Right lobe of liver (tissue), 6 donors: ENCODE measurements at regions of chr15 and their contacts with region 1.

Region 1: DNA sequence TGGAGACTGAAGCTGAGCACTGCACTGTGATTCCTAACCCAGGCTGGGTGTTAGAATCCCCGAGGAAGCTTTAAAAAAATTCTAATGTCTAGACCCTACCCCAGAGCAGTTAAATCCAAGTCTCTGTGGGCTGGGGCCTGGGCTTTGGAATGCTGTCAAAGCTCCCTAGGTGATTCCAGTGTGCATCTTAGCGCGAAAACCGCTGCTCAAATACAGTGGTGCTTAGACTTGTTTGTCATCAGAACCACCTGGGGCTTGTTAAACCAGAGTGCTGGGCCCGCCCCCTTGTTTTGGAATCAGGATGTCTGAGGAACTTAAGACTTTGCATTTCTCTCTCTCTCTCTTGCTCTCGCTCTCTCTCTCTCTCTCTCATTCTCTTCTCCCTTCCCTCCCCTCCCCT is 20.7 kb downstream of the RHCG start:
- DNase-seq: peak in 1 of 3 donors; percentile 25
- ATAC-seq: no peak
- H3K4me3 ChIP-seq: no peak overlapping the region
- H3K27ac ChIP-seq: no peak overlapping the region
- H3K4me1 ChIP-seq: no peaks in the 10 kb centered on the region
- H3K27me3 ChIP-seq: no peaks in the 10 kb centered on the region
- CTCF ChIP-seq: no peak
- POLR2A ChIP-seq: no peak

Region 2: GRCh38 chr15:89442671-89443307 is 32.9 kb before region 1 on chr15:
- intact Hi-C with region 1: loop called in 1 of 2 experiments (anchors 5 kb)
- DNase-seq: peak in 2 of 3 donors; percentile 69 to 76
- ATAC-seq: peak; percentile 73 to 87 (median 86)
- H3K4me3 ChIP-seq: no peak overlapping the region
- H3K27ac ChIP-seq: no peak overlapping the region
- H3K4me1 ChIP-seq: no peaks in the 10 kb centered on the region
- H3K27me3 ChIP-seq: no peaks in the 10 kb centered on the region
- CTCF ChIP-seq: peak; percentile 72 to 86 (median 82)
- POLR2A ChIP-seq: no peak